ENCODE measurements at regions of chr20 and their contacts with region 1.

Region 1: GRCh38 chr20:58209652-58210397 is 18.6 kb downstream of the ANKRD60 start:
- DNase-seq: peak; percentile 94
- H3K4me3 ChIP-seq: peak overlapping the region in 1 of 2 experiments; percentile 56; a peak in 1 of 4 replicates
- H3K27ac ChIP-seq: no peak overlapping the region
- H3K4me1 ChIP-seq: peaks cover 0 to 11% of the 10 kb centered on the region in 2 experiments; a peak in 1 of 4 replicates
- H3K27me3 ChIP-seq: no peaks in the 10 kb centered on the region; the same call in 1 of the 2 replicates
- CTCF ChIP-seq: peak; percentile 100
- EP300 ChIP-seq: no peak
- RAD21 ChIP-seq: peak; percentile 99

Region 2: GRCh38 chr20:57582432-57583305 is 627.2 kb before region 1 on chr20:
- CTCF ChIA-PET with region 1: interaction called, 12 read pairs
- POLR2A ChIA-PET with region 1: no interaction called
- DNase-seq: peak; percentile 74
- H3K4me3 ChIP-seq: no peak overlapping the region; a peak in 1 of 4 replicates
- H3K27ac ChIP-seq: no peak overlapping the region
- H3K4me1 ChIP-seq: no peaks in the 10 kb centered on the region; a peak in 1 of 4 replicates
- H3K27me3 ChIP-seq: peaks cover 7% of the 10 kb centered on the region; the same call in 1 of the 2 replicates
- CTCF ChIP-seq: peak; percentile 45
- EP300 ChIP-seq: no peak
- RAD21 ChIP-seq: peak; percentile 44

Region 3: GRCh38 chr20:57611586-57612311 is 598.1 kb before region 1 on chr20:
- CTCF ChIA-PET with region 1: interaction called, 31 read pairs
- POLR2A ChIA-PET with region 1: no interaction called
- DNase-seq: no peak
- H3K4me3 ChIP-seq: no peak overlapping the region
- H3K27ac ChIP-seq: no peak overlapping the region
- H3K4me1 ChIP-seq: no peaks in the 10 kb centered on the region
- H3K27me3 ChIP-seq: no peaks in the 10 kb centered on the region; the same call in 1 of the 2 replicates
- CTCF ChIP-seq: no peak
- EP300 ChIP-seq: no peak
- RAD21 ChIP-seq: no peak

Region 4: GRCh38 chr20:58179432-58180099 is 30.3 kb before region 1 on chr20:
- CTCF ChIA-PET with region 1: interaction called, 23 read pairs
- POLR2A ChIA-PET with region 1: no interaction called
- DNase-seq: peak; percentile 92
- H3K4me3 ChIP-seq: peak overlapping the region; percentile 36 to 41; a peak in 3 of 4 replicates
- H3K27ac ChIP-seq: peak overlapping the region in 1 of 2 experiments; percentile 58; a peak in 1 of 4 replicates
- H3K4me1 ChIP-seq: peaks cover 0 to 47% of the 10 kb centered on the region in 2 experiments; a peak in 2 of 4 replicates
- H3K27me3 ChIP-seq: no peaks in the 10 kb centered on the region
- CTCF ChIP-seq: peak; percentile 95
- EP300 ChIP-seq: no peak
- RAD21 ChIP-seq: peak; percentile 92

Region 5: GRCh38 chr20:58224974-58225373 is 15.1 kb after region 1 on chr20:
- CTCF ChIA-PET with region 1: interaction called, 30 read pairs
- POLR2A ChIA-PET with region 1: no interaction called
- DNase-seq: no peak
- H3K4me3 ChIP-seq: no peak overlapping the region
- H3K27ac ChIP-seq: no peak overlapping the region
- H3K4me1 ChIP-seq: peaks cover 0 to 20% of the 10 kb centered on the region in 2 experiments; a peak in 1 of 4 replicates
- H3K27me3 ChIP-seq: no peaks in the 10 kb centered on the region
- CTCF ChIP-seq: no peak
- EP300 ChIP-seq: no peak
- RAD21 ChIP-seq: no peak

Region 6: DNA sequence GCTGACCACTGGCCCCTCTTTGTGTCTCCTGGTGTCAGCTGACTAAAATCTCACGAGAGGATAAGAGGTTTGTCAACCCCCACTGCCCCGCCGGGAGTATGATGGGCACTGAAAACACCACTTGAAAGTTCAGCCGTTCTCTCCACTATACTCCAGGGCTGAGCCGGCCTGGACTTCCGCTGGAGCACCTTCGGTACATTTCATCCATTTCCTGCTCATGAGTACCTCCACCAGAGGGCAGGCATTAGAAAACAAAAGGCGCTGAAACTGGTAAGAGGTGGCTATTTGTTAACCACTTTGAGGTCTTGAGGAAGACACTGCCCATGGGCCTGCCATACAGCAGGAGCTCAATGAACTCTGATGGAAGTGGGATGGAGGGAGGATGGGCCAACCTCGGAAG is 36.5 kb after region 1 on chr20:
- CTCF ChIA-PET with region 1: no interaction called
- POLR2A ChIA-PET with region 1: no interaction called
- DNase-seq: no peak
- H3K4me3 ChIP-seq: no peak overlapping the region
- H3K27ac ChIP-seq: no peak overlapping the region
- H3K4me1 ChIP-seq: peaks cover 0 to 5% of the 10 kb centered on the region in 2 experiments; a peak in 1 of 4 replicates
- H3K27me3 ChIP-seq: no peaks in the 10 kb centered on the region
- CTCF ChIP-seq: peak; percentile 48
- EP300 ChIP-seq: no peak
- RAD21 ChIP-seq: peak; percentile 53

Region 7: GRCh38 chr20:58433764-58434163 is 223.9 kb after region 1 on chr20:
- CTCF ChIA-PET with region 1: no interaction called
- POLR2A ChIA-PET with region 1: no interaction called
- DNase-seq: no peak
- H3K4me3 ChIP-seq: no peak overlapping the region
- H3K27ac ChIP-seq: peak overlapping the region in 1 of 2 experiments; percentile 42; a peak in 2 of 4 replicates
- H3K4me1 ChIP-seq: peaks cover 0 to 12% of the 10 kb centered on the region in 2 experiments; a peak in 2 of 4 replicates
- H3K27me3 ChIP-seq: no peaks in the 10 kb centered on the region
- CTCF ChIP-seq: no peak
- EP300 ChIP-seq: no peak
- RAD21 ChIP-seq: no peak